ENCODE measurements at regions of chr5 and their contacts with region 1.

Region 1: DNA sequence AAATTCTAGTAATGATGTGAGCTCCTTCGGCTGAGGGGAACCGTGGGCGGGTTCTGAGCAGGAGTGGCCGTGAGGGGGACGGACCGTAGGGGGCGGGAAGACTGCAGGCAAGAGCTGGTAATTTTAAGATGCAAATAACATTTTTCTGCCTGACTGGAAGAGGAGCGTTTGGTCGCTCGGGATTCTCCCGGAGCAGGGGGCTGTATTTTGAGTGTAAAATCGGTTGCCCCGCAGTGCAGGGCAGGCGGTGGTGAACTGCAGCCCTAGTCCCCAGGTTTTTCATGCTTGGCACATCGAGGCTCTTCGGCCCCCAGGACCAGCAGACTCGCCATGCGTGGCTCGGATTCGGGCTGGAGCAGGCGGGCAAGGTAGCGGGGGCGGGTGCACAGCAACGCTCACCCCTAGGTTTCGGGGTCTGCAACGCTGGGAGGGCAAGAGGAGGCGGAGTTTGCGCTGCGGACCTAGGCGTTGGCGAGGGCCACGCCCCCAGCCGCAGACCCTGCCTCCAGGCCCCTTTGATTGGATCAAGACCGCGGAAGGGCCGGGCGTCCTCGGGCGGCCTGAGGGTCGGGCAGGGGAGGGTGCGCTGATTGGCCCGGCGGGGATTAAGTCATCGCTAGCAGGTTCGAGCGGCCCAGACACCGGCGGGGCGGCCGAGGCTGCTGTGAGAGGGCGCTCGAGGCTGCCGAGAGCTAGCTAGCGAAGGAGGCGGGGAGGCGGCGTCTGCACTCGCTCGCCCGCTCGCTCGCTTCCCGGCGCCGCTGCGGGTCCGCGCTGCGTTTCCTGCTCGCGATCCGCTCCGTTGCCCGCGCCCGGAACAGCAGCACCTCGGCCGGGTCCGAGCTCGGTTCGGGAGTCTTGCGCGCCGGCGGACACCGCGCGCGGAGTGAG is at the start of gene ARHGAP26:
- DNase-seq: peak; percentile 93 to 95
- ATAC-seq: peak; percentile 89 to 97 (median 91)
- H3K4me3 ChIP-seq: peak within 1 kb of the TSS; percentile 80
- H3K4me3 Mint-ChIP-seq: peak within 1 kb of the TSS; percentile 99
- H3K27ac ChIP-seq: peak within 1 kb of the TSS; percentile 77
- H3K27ac Mint-ChIP-seq: peak within 1 kb of the TSS; percentile 88 to 94
- H3K4me1 ChIP-seq: peaks cover 21% of the 10 kb centered on the region
- H3K4me1 Mint-ChIP-seq: peaks cover 51 to 52% of the 10 kb centered on the region in 2 donors
- H3K27me3 ChIP-seq: no peaks in the 10 kb centered on the region
- H3K27me3 Mint-ChIP-seq: no peaks in the 10 kb centered on the region
- CTCF ChIP-seq: no peak
- total RNA-seq, gene ARHGAP26: 153 to 159 (median 158) TPM

Region 2: GRCh38 chr5:142783601-142784341 is 13.8 kb after region 1 on chr5:
- intact Hi-C with region 1: loop called (anchors 1 kb)
- DNase-seq: peak; percentile 55 to 70
- ATAC-seq: peak; percentile 67 to 82 (median 77)
- H3K4me3 ChIP-seq: peak overlapping the region; percentile 14
- H3K4me3 Mint-ChIP-seq: peak overlapping the region; percentile 69
- H3K27ac ChIP-seq: peak overlapping the region; percentile 62
- H3K27ac Mint-ChIP-seq: peak overlapping the region; percentile 91 to 94
- H3K4me1 ChIP-seq: peaks cover 72% of the 10 kb centered on the region
- H3K4me1 Mint-ChIP-seq: peaks cover 94 to 96% of the 10 kb centered on the region in 2 donors
- H3K27me3 ChIP-seq: no peaks in the 10 kb centered on the region
- H3K27me3 Mint-ChIP-seq: no peaks in the 10 kb centered on the region
- CTCF ChIP-seq: no peak

Region 3: GRCh38 chr5:142798099-142798770 is 28.2 kb after region 1 on chr5:
- intact Hi-C with region 1: loop called (anchors 1 kb)
- DNase-seq: peak; percentile 29 to 71
- ATAC-seq: peak; percentile 66 to 90 (median 82)
- H3K4me3 ChIP-seq: peak overlapping the region; percentile 15
- H3K4me3 Mint-ChIP-seq: peak overlapping the region; percentile 77
- H3K27ac ChIP-seq: peak overlapping the region; percentile 61
- H3K27ac Mint-ChIP-seq: peak overlapping the region; percentile 83 to 90
- H3K4me1 ChIP-seq: peaks cover 53% of the 10 kb centered on the region
- H3K4me1 Mint-ChIP-seq: peaks cover 83 to 84% of the 10 kb centered on the region in 2 donors
- H3K27me3 ChIP-seq: no peaks in the 10 kb centered on the region
- H3K27me3 Mint-ChIP-seq: no peaks in the 10 kb centered on the region
- CTCF ChIP-seq: no peak

Region 4: GRCh38 chr5:142845402-142845921 is 75.5 kb after region 1 on chr5:
- intact Hi-C with region 1: loop called (anchors 5 kb)
- DNase-seq: peak in 1 of 2 donors; percentile 49
- ATAC-seq: peak; percentile 54 to 75 (median 68)
- H3K4me3 ChIP-seq: no peak overlapping the region
- H3K4me3 Mint-ChIP-seq: peak overlapping the region; percentile 73
- H3K27ac ChIP-seq: peak overlapping the region; percentile 33
- H3K27ac Mint-ChIP-seq: peak overlapping the region; percentile 68 to 90
- H3K4me1 ChIP-seq: peaks cover 55% of the 10 kb centered on the region
- H3K4me1 Mint-ChIP-seq: peaks cover 96% of the 10 kb centered on the region in 2 donors
- H3K27me3 ChIP-seq: no peaks in the 10 kb centered on the region
- H3K27me3 Mint-ChIP-seq: no peaks in the 10 kb centered on the region
- CTCF ChIP-seq: no peak

Region 5: GRCh38 chr5:142872795-142873194 is 102.8 kb after region 1 on chr5:
- intact Hi-C with region 1: loop called (anchors 1 kb)
- DNase-seq: no peak
- ATAC-seq: no peak
- H3K4me3 ChIP-seq: no peak overlapping the region
- H3K4me3 Mint-ChIP-seq: no peak overlapping the region
- H3K27ac ChIP-seq: no peak overlapping the region
- H3K27ac Mint-ChIP-seq: no peak overlapping the region
- H3K4me1 ChIP-seq: no peaks in the 10 kb centered on the region
- H3K4me1 Mint-ChIP-seq: peaks cover 30 to 45% of the 10 kb centered on the region in 2 donors
- H3K27me3 ChIP-seq: no peaks in the 10 kb centered on the region
- H3K27me3 Mint-ChIP-seq: no peaks in the 10 kb centered on the region
- CTCF ChIP-seq: no peak

Region 6: DNA sequence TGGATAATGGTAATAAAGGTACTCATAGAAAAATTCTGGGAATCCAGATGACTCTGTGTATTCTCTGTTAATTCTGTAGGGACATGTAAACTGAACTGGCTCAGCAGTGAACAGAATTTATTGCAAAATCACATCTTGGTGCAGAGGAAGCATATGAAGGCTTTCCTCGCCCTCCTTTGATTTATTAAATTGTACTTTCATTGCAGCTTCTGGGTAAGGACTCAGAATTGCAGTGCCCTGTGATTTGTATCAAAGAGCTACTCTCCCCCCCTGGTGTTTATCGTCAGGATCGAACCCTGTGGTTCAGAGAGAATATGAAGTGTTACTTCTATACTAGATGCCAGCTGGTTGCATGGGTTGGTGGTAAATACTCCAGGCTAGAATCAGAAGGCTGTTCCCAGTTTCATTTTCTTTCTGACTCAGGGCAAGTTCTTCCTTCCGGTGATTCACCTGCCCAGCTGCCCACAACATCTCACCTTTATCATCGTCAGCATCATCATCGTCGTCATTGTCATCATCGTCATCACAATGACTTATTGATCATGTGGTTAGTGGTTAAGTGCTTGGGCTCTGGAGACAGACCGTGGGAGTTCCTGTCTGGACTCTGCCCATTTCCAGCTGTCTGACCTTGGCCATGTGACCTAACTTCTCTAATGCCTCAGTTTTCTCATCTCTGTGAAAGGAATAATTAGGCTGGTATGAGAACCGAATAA is 239.0 kb after region 1 on chr5:
- intact Hi-C with region 1: loop called (anchors 5 kb)
- DNase-seq: peak; percentile 71 to 95
- ATAC-seq: peak; percentile 88 to 95 (median 88)
- H3K4me3 ChIP-seq: no peak overlapping the region
- H3K4me3 Mint-ChIP-seq: peak overlapping the region; percentile 69
- H3K27ac ChIP-seq: peak overlapping the region; percentile 94
- H3K27ac Mint-ChIP-seq: peak overlapping the region; percentile 96 to 100
- H3K4me1 ChIP-seq: peaks cover 46% of the 10 kb centered on the region
- H3K4me1 Mint-ChIP-seq: peaks cover 58 to 63% of the 10 kb centered on the region in 2 donors
- H3K27me3 ChIP-seq: no peaks in the 10 kb centered on the region
- H3K27me3 Mint-ChIP-seq: no peaks in the 10 kb centered on the region
- CTCF ChIP-seq: peak; percentile 40